Activated B cell treated with CpG ODN at 0.5 μM for 24 hours (primary cell): ENCODE measurements at regions of chr6 and their contacts with region 1.

Region 1: GRCh38 chr6:114304304-114304887 is 38.4 kb downstream of the HS3ST5 start:
- DNase-seq: no peak
- ATAC-seq: no peak
- H3K4me3 Mint-ChIP-seq: no peak overlapping the region
- H3K27ac Mint-ChIP-seq: no peak overlapping the region
- H3K4me1 Mint-ChIP-seq: no peaks in the 10 kb centered on the region
- H3K27me3 Mint-ChIP-seq: no peaks in the 10 kb centered on the region
- CTCF ChIP-seq: no peak

Region 2: DNA sequence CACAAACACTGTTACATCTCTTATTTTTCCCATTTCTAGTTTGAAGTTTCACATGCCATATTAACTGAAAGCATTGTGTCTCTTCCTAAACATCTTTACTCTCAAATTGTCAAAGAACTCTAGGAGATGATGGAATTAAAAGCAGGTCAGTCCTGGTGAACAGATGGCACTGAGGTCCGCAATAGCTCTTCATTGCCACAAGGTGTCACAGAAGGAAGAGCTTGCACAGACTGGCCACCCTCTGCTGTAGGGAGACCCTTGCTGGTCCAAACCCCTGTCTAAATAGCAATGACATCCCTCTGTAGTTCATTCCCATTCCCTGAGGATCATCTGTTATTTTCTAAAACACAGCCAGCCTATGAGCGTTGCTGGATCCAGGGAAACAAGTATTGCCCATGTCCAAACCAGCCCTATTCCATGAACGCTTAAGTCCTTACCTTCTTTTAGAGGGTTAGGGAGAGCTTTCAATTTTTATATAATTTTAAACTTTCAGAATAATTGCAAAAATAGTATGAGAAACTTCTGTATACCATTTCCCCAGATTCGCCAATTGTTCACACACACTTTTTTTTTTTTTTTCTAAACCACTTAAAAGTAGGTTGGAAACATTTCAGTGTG is 323.4 kb before region 1 on chr6:
- CTCF ChIA-PET with region 1: interaction called, 5 read pairs
- POLR2A ChIA-PET with region 1: no interaction called
- intact Hi-C with region 1: loop called (anchors 10 kb)
- DNase-seq: no peak
- ATAC-seq: peak; percentile 45
- H3K4me3 Mint-ChIP-seq: no peak overlapping the region
- H3K27ac Mint-ChIP-seq: no peak overlapping the region
- H3K4me1 Mint-ChIP-seq: peaks cover 22% of the 10 kb centered on the region
- H3K27me3 Mint-ChIP-seq: no peaks in the 10 kb centered on the region
- CTCF ChIP-seq: no peak

Region 3: DNA sequence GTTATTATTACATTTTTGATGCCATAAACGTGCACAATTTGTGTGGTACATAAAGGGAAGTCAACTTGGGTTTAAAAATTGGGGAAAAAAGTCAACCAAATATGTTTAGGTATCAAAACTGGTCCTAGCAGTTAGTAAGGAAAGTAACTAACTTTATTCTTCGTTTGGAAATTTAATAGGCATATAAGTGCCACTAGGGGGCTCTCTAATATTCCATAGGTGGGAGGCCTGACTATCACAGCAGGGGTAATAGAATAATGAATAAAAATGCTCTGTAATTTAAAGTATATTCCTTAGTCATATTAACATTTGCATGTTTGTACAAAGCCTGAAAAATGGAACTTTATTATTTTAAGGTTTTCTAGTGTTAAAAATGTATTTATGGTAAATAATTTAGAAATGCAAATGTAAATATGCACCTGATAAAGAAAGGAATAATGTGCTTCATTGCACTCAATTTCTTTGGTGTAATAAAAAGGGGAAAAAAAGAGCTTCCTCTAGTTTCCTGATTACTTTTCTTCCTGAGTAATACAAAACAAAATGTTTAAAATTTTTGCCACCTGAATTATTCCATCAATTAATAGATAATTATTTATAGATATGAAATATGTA is 207.7 kb before region 1 on chr6:
- CTCF ChIA-PET with region 1: no interaction called
- POLR2A ChIA-PET with region 1: no interaction called
- intact Hi-C with region 1: loop called (anchors 10 kb)
- DNase-seq: no peak
- ATAC-seq: no peak
- H3K4me3 Mint-ChIP-seq: no peak overlapping the region
- H3K27ac Mint-ChIP-seq: no peak overlapping the region
- H3K4me1 Mint-ChIP-seq: no peaks in the 10 kb centered on the region
- H3K27me3 Mint-ChIP-seq: peaks cover 2% of the 10 kb centered on the region
- CTCF ChIP-seq: peak; percentile 87

Region 4: DNA sequence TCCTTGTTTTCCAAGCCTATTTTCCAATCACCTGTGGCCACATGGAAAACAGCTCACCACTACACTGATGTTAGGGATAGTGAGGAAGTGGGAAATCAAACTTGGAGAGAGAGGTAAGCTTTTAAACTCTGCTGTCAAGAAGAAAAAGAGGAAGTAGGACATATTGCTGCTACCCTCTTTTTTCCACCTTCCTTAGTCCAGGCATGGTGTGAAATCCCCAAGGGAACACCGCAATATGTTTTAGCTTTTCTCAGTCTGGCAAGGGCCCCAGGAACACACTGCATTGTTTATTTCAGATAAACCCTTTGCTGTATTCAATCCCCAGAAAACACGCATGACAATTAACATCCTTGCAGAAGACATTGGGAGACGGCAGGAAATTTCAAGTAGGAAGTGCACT is 22.9 kb before region 1 on chr6:
- CTCF ChIA-PET with region 1: no interaction called
- POLR2A ChIA-PET with region 1: no interaction called
- intact Hi-C with region 1: no loop called
- DNase-seq: no peak
- ATAC-seq: no peak
- H3K4me3 Mint-ChIP-seq: no peak overlapping the region
- H3K27ac Mint-ChIP-seq: no peak overlapping the region
- H3K4me1 Mint-ChIP-seq: no peaks in the 10 kb centered on the region
- H3K27me3 Mint-ChIP-seq: peaks cover 4% of the 10 kb centered on the region
- CTCF ChIP-seq: no peak